CD8-positive, alpha-beta T cell (primary cell): ENCODE measurements at regions of chr17 and their contacts with region 1.

Region 1: DNA sequence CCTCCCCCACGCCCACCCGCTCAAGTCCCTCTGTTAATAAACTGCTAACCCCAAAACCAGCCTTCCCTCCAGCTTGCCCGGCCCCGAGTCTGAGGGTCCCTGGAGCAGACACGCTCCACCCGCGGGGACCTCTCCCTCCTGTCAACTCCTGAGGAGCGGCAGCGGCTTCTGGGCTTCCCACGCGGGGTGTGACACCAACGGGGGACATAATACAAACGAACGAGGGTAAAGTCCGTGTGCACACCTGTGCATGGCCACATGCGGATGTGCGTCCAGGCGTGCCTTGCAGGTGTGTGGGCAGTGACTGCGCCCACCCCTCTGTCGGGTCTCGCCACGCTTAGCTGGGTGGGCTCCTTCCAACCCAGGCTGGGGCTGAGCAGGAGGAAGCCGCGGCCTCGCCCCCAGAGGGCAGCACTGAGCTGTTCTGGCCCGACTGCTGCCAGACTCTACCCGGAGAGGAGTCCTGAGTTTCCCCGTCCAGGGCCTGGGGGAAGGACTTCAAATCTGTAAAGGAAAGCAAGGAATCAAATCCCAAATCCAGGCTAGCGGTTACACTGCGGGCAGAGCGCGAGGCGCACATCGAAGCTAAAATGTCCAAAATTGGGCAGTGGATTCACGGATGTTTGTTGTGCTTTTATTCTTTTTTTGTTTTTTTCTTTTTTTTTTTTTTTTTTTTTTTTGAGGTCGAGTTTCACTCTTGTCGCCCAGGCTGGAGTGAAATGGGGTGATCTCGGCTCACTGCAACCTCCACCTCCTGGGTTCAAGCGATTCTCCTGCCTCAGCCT is 24.2 kb upstream of the KRT17 start:
- DNase-seq: peak; percentile 65 to 92 (median 86)
- ATAC-seq: peak; percentile 90
- H3K4me3 ChIP-seq: peak overlapping the region; percentile 52 to 55
- H3K4me3 Mint-ChIP-seq: peak overlapping the region; percentile 80
- H3K27ac ChIP-seq: no peak overlapping the region
- H3K27ac Mint-ChIP-seq: no peak overlapping the region
- H3K4me1 ChIP-seq: peaks cover 13% of the 10 kb centered on the region
- H3K4me1 Mint-ChIP-seq: peaks cover 9% of the 10 kb centered on the region
- H3K27me3 ChIP-seq: no peaks in the 10 kb centered on the region
- H3K27me3 Mint-ChIP-seq: no peaks in the 10 kb centered on the region
- CTCF ChIP-seq: peak; percentile 70

Region 2: GRCh38 chr17:40803617-40804082 is 845.0 kb before region 1 on chr17:
- CTCF ChIA-PET with region 1: interaction called, 6 read pairs
- POLR2A ChIA-PET with region 1: no interaction called
- intact Hi-C with region 1: loop called (anchors 1 kb)
- DNase-seq: peak; percentile 50 to 82 (median 75)
- ATAC-seq: peak; percentile 92
- H3K4me3 ChIP-seq: no peak overlapping the region
- H3K4me3 Mint-ChIP-seq: no peak overlapping the region
- H3K27ac ChIP-seq: no peak overlapping the region
- H3K27ac Mint-ChIP-seq: no peak overlapping the region
- H3K4me1 ChIP-seq: no peaks in the 10 kb centered on the region
- H3K4me1 Mint-ChIP-seq: peaks cover 4% of the 10 kb centered on the region
- H3K27me3 ChIP-seq: peaks cover 0 to 4% of the 10 kb centered on the region in 2 experiments
- H3K27me3 Mint-ChIP-seq: peaks cover 44% of the 10 kb centered on the region
- CTCF ChIP-seq: peak; percentile 94

Region 3: DNA sequence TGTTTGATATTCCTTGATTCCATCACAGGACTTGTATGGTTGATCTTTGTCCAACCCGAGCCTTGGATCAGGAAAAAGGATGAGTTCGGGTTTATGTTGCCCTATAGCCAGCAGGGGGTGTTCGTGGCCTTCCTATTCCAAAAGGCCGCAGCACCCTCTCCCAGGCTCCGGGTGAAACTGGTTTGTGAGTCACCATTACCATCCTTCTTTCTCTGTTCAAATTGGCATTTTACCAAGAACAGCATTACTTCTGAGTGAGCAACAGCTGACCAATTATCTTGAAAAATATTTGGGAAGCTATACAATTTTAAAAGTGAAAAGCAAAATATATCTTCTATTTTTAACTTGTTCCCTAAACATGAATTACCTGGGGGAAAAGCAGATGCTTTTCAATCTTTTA is 739.3 kb before region 1 on chr17:
- CTCF ChIA-PET with region 1: interaction called, 82 read pairs
- POLR2A ChIA-PET with region 1: no interaction called
- intact Hi-C with region 1: loop called (anchors 1 kb)
- DNase-seq: peak; percentile 33 to 81 (median 66)
- ATAC-seq: peak; percentile 88
- H3K4me3 ChIP-seq: no peak overlapping the region
- H3K4me3 Mint-ChIP-seq: no peak overlapping the region
- H3K27ac ChIP-seq: no peak overlapping the region
- H3K27ac Mint-ChIP-seq: no peak overlapping the region
- H3K4me1 ChIP-seq: no peaks in the 10 kb centered on the region
- H3K4me1 Mint-ChIP-seq: no peaks in the 10 kb centered on the region
- H3K27me3 ChIP-seq: peaks cover 0 to 5% of the 10 kb centered on the region in 2 experiments
- H3K27me3 Mint-ChIP-seq: peaks cover 35% of the 10 kb centered on the region
- CTCF ChIP-seq: peak; percentile 82

Region 4: GRCh38 chr17:41338961-41339485 is 309.6 kb before region 1 on chr17:
- CTCF ChIA-PET with region 1: interaction called, 3 read pairs
- POLR2A ChIA-PET with region 1: no interaction called
- intact Hi-C with region 1: loop called in 1 of 2 experiments (anchors 5 kb)
- DNase-seq: peak in 5 of 9 experiments; percentile 38 to 94 (median 68)
- ATAC-seq: peak; percentile 82
- H3K4me3 ChIP-seq: peak overlapping the region in 1 of 2 experiments; percentile 2
- H3K4me3 Mint-ChIP-seq: peak overlapping the region; percentile 63
- H3K27ac ChIP-seq: peak overlapping the region; percentile 58 to 63
- H3K27ac Mint-ChIP-seq: peak overlapping the region; percentile 98
- H3K4me1 ChIP-seq: peaks cover 85% of the 10 kb centered on the region
- H3K4me1 Mint-ChIP-seq: peaks cover 90% of the 10 kb centered on the region
- H3K27me3 ChIP-seq: no peaks in the 10 kb centered on the region
- H3K27me3 Mint-ChIP-seq: no peaks in the 10 kb centered on the region
- CTCF ChIP-seq: no peak

Region 5: DNA sequence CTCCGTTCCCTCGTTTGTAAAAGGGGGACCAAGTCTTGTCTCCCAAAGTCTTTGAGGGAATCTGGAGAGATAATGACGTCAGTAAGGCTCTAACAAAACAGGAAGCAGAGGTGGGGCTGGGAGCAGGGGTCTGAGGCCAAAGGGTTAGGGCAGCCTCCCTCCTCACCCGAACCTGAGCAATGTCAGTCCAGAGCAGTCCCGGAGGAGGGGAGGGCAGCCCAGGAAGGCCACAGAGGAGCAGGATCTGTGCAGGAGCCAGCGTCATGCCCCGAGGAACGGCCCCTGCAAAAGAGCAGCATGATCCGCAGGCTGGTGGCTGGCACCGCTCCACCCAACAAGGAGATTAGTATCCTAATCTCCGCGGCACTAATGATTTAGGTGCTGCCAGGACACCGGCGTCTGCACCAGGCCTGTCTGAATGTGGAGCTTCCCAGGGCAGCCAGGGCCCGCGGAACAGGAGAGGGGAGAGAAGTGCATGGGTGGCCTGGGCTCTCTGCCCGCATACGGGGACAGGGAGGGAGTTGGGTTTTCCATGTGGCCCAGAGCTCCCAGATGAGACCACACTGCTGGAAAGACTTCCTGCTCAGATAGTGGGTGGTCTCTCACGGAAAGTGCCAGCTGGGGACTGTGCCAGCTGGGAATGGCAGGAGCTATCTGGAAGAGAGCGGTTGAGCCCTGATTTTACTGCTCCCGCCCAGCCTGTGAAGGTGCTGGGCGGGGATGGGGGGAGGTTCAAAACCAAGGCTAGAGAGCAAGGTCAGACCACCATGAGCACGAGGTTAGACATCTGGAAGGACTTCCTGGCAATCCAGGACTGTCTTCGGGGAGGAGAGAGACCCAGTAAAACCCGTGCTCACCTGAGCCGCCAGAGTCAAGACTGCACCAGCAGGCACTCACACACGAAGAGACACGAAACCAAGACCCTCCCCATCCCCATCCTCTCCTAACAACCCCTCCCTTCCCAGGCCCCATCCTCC is 13.2 kb before region 1 on chr17:
- CTCF ChIA-PET with region 1: interaction called, 15 read pairs
- POLR2A ChIA-PET with region 1: interaction called, 4 read pairs
- intact Hi-C with region 1: no loop called
- DNase-seq: peak in 1 of 9 experiments; percentile 1
- ATAC-seq: no peak
- H3K4me3 ChIP-seq: no peak overlapping the region
- H3K4me3 Mint-ChIP-seq: no peak overlapping the region
- H3K27ac ChIP-seq: no peak overlapping the region
- H3K27ac Mint-ChIP-seq: no peak overlapping the region
- H3K4me1 ChIP-seq: no peaks in the 10 kb centered on the region
- H3K4me1 Mint-ChIP-seq: no peaks in the 10 kb centered on the region
- H3K27me3 ChIP-seq: peaks cover 0 to 4% of the 10 kb centered on the region in 2 experiments
- H3K27me3 Mint-ChIP-seq: no peaks in the 10 kb centered on the region
- CTCF ChIP-seq: no peak

Region 6: DNA sequence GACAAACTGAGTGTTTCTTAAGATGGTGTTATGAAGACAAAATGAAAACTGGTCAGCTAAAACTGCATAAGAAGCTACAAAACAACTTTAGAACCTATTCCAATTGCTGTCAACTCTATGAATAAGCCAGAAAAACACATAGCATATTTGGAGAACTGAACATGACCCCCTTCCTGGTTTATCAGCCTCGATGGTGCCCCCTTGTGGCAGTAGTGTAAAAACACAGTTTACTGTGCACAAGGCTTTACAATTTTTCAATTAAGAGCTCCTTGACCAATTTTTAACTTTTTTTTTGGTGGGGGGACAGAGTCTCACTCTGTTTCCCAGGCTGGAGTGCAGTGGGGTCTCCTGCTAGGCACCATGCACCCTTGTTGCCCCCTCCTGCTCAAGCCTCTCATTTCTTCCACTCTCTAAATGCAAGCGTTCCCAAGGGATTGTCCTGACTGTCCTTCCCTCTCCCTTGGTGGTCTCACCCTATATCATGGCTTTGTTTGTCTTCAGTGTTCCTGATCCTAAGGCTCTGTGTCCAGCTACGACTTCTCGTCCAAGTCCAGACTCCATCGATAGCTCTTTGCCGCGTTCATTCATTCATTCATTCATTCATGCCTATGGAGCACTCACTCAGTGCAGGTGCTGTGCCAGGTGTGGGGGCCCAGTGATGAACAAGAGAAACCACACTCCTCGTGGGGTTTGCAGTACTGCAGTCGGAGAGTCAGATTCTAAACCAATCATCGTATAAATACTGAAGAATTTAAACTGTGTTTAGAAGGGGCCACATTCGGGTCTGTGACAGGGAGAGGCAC is 47.6 kb after region 1 on chr17:
- CTCF ChIA-PET with region 1: interaction called, 15 read pairs
- POLR2A ChIA-PET with region 1: no interaction called
- intact Hi-C with region 1: no loop called
- DNase-seq: peak; percentile 42 to 86 (median 81)
- ATAC-seq: peak; percentile 55
- H3K4me3 ChIP-seq: no peak overlapping the region
- H3K4me3 Mint-ChIP-seq: no peak overlapping the region
- H3K27ac ChIP-seq: no peak overlapping the region
- H3K27ac Mint-ChIP-seq: peak overlapping the region; percentile 7
- H3K4me1 ChIP-seq: peaks cover 5% of the 10 kb centered on the region
- H3K4me1 Mint-ChIP-seq: peaks cover 29% of the 10 kb centered on the region
- H3K27me3 ChIP-seq: no peaks in the 10 kb centered on the region
- H3K27me3 Mint-ChIP-seq: no peaks in the 10 kb centered on the region
- CTCF ChIP-seq: peak; percentile 82